Activated naive CD4-positive, alpha-beta T cell treated with anti-CD3 and anti-CD28 coated beads for 36 hours (primary cell): ENCODE measurements at regions of chr14 and their contacts with region 1.

Region 1: DNA sequence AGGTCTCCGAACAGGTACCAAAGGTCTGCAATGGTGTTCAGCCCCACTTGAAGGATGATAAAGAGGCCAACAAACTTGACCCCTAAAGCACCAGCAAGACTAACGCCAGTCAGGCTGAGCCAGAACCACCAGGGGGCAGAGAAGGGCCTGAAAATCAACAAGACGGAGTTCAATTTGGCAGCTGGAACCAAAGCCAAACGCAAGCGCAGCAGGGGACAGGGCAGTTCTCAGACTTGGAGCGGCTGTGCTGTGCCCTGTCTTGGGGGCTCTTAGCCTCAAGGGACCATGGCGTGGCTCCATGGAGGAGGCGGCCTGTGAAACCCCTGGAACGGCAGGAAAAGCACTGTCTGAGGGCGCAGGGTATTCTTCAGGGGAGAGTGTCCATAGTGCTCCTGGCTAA is 19.6 kb downstream of the POMT2 start:
- DNase-seq: peak; percentile 82
- H3K4me3 Mint-ChIP-seq: no peak overlapping the region
- H3K27ac Mint-ChIP-seq: no peak overlapping the region
- H3K4me1 Mint-ChIP-seq: peaks cover 13% of the 10 kb centered on the region
- H3K27me3 Mint-ChIP-seq: no peaks in the 10 kb centered on the region

Region 2: GRCh38 chr14:77151918-77152588 is 149.1 kb before region 1 on chr14:
- CTCF ChIA-PET with region 1: interaction called, 12 read pairs
- intact Hi-C with region 1: no loop called
- DNase-seq: no peak
- H3K4me3 Mint-ChIP-seq: no peak overlapping the region
- H3K27ac Mint-ChIP-seq: no peak overlapping the region
- H3K4me1 Mint-ChIP-seq: no peaks in the 10 kb centered on the region
- H3K27me3 Mint-ChIP-seq: peaks cover 25% of the 10 kb centered on the region

Region 3: DNA sequence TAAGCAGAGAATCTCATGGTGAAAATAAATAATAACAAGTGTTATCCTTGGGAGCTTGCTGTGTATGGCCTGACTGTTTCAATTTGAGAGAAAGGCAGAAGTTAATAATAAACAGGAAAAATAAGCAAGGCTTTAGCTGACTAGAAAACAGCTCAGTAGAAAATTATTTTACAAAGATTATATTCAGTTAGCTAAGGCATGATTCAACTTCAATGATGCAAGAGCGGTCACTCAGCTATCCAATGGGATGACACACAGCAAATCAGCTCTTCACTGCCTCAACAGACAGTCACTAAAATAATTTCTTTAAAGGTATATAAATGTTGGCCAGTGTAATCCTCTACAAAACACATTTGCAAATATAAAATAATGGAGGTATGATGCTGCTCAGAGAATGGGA is 38.3 kb after region 1 on chr14:
- CTCF ChIA-PET with region 1: no interaction called
- intact Hi-C with region 1: no loop called
- DNase-seq: no peak
- H3K4me3 Mint-ChIP-seq: no peak overlapping the region
- H3K27ac Mint-ChIP-seq: no peak overlapping the region
- H3K4me1 Mint-ChIP-seq: no peaks in the 10 kb centered on the region
- H3K27me3 Mint-ChIP-seq: no peaks in the 10 kb centered on the region

Region 4: GRCh38 chr14:77376771-77377501 is 75.8 kb after region 1 on chr14 and contains the starts of genes SAMD15 and TMED8:
- CTCF ChIA-PET with region 1: interaction called, 3 read pairs
- intact Hi-C with region 1: loop called (anchors 5 kb)
- DNase-seq: peak; percentile 84
- H3K4me3 Mint-ChIP-seq: peak within 1 kb of the TSS; percentile 90
- H3K27ac Mint-ChIP-seq: peak within 1 kb of the TSS; percentile 80
- H3K4me1 Mint-ChIP-seq: peaks cover 38% of the 10 kb centered on the region
- H3K27me3 Mint-ChIP-seq: no peaks in the 10 kb centered on the region
- total RNA-seq, gene SAMD15: 0.10 TPM in 1 of 2 experiments, not detected in the other
- total RNA-seq, gene TMED8: 21.5 to 21.7 TPM

Region 5: GRCh38 chr14:77470192-77470870 is 169.2 kb after region 1 on chr14:
- CTCF ChIA-PET with region 1: no interaction called
- intact Hi-C with region 1: no loop called
- DNase-seq: no peak
- H3K4me3 Mint-ChIP-seq: no peak overlapping the region
- H3K27ac Mint-ChIP-seq: no peak overlapping the region
- H3K4me1 Mint-ChIP-seq: no peaks in the 10 kb centered on the region
- H3K27me3 Mint-ChIP-seq: no peaks in the 10 kb centered on the region

Region 6: GRCh38 chr14:77554207-77554606 is 253.1 kb after region 1 on chr14:
- CTCF ChIA-PET with region 1: interaction called, 3 read pairs
- intact Hi-C with region 1: loop called (anchors 1 kb)
- DNase-seq: no peak
- H3K4me3 Mint-ChIP-seq: no peak overlapping the region
- H3K27ac Mint-ChIP-seq: peak overlapping the region; percentile 58
- H3K4me1 Mint-ChIP-seq: peaks cover 12% of the 10 kb centered on the region
- H3K27me3 Mint-ChIP-seq: no peaks in the 10 kb centered on the region

Region 7: DNA sequence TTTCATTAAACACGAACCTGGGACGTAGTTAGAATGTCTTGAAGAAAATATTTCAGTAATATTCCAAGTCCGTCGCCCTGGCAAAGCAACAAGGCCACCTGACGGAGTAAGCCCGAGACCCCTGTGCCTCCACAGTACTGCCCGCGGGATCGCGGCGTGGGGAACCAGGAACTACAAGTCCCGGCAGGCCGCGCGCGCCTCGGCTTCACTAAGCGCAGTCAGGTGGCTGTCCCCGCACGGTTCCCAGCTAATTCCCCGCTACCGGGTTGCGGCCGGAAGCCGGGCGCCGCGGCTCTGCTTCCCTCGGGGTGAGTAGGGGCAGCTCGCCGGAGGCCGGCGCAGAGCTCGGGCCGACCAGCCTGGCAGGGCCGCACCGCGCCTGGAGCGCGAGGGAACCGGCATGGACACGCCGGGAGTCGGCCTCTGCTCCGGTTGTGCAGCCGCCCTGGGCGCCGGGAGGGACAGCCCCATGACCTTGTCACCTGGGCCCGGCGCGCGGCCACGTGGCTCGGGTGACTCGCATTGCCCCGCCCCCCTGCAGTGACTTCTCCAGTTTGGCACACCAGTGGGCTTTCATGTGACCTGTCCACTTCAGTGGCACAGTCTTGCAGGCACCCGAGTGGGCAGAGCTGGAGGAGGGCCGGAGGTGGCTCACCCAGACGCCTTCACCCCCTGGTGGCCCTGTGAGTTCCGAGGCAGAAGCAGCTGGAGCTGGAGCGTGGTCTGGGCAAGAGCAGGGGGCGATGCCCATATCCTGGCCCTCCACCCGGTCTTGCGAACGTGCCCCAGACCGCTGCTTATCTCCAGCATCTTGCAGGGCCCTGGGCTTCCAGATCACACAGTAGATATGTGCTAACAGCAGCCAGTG is 499.0 kb after region 1 on chr14 and contains the start of gene ADCK1:
- CTCF ChIA-PET with region 1: no interaction called
- intact Hi-C with region 1: loop called (anchors 1 kb)
- DNase-seq: peak; percentile 91
- H3K4me3 Mint-ChIP-seq: peak within 1 kb of the TSS; percentile 86
- H3K27ac Mint-ChIP-seq: peak within 1 kb of the TSS; percentile 84
- H3K4me1 Mint-ChIP-seq: peaks cover 12% of the 10 kb centered on the region
- H3K27me3 Mint-ChIP-seq: no peaks in the 10 kb centered on the region
- total RNA-seq, gene ADCK1: 4.2 to 5.1 TPM